Activated CD4-positive, alpha-beta memory T cell treated with anti-CD3 and anti-CD28 coated beads, Interleukin-2, amount 10 ng/mL, durations not matched to agents 7 days and 5 days (primary cell): ENCODE measurements at regions of chr5 and their contacts with region 1.

Region 1: DNA sequence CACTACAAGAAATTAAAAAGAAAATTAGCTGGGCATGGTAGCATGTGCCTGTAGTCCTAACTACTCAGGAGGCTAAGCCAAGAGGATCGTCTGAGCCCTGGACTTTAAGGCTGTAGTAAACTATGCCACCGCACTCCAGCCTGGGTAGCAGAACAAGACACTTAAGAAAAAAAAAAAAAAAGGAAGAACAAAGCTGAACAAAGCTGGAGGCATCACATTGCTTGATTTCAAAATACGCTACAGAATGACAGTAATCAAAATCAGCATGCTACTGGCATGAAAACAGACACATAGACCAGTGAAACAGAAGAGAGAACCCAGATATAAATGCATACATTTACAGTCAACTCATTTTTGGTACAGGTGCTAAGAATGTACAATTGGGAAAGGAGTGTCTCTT is 14.5 kb upstream of the OTULIN start:
- DNase-seq: no peak
- H3K4me3 Mint-ChIP-seq: no peak overlapping the region
- H3K27ac Mint-ChIP-seq: no peak overlapping the region
- H3K4me1 Mint-ChIP-seq: peaks cover 8% of the 10 kb centered on the region
- H3K27me3 Mint-ChIP-seq: peaks cover 36% of the 10 kb centered on the region

Region 2: DNA sequence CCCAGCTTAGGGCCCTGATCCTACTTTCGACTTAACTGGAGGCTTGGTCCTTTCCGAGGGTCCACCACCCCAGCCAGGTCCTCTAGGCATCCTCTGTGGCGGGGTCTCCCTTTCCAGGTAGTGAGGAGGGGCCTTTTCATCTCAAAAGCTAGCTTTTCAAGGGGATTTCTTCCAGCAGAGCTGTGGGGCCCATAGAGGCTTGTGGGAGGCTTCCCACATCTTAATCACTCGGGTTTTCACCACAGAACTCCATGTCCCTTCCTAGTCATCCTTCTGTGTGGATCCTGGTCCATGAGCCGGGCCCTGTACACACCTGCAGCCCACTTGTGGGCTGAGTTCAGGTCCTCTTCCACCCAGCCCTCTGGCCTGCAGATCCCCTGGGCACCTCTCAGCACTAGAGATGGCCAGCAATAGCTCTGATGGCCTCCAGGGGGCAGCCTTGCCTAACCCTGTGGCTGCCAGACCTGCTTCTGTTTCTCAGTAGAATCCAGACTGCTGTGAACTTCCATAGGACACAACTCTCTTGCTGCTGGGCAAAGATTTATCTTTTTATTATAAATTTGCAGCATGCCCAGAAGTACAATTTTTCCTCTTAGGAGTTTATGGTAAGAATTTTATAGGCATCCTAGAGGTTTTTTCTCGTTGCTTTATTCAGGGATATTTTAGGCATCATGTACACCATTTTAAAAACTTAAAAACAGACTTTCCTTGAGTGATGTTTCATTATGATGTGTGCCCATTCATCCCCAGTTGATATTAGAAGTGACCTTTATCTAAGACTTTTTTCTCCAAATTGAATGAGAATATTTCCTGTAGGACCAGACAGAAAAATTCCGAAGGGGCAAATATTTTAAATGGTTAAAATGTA is 298.0 kb before region 1 on chr5:
- CTCF ChIA-PET with region 1: interaction called, 50 read pairs
- POLR2A ChIA-PET with region 1: interaction called, 5 read pairs
- DNase-seq: peak; percentile 68
- H3K4me3 Mint-ChIP-seq: no peak overlapping the region
- H3K27ac Mint-ChIP-seq: no peak overlapping the region
- H3K4me1 Mint-ChIP-seq: peaks cover 8% of the 10 kb centered on the region
- H3K27me3 Mint-ChIP-seq: peaks cover 5% of the 10 kb centered on the region

Region 3: GRCh38 chr5:14357851-14358250 is 292.2 kb before region 1 on chr5:
- CTCF ChIA-PET with region 1: interaction called, 214 read pairs
- POLR2A ChIA-PET with region 1: interaction called, 9 read pairs
- DNase-seq: no peak
- H3K4me3 Mint-ChIP-seq: no peak overlapping the region
- H3K27ac Mint-ChIP-seq: no peak overlapping the region
- H3K4me1 Mint-ChIP-seq: peaks cover 8% of the 10 kb centered on the region
- H3K27me3 Mint-ChIP-seq: peaks cover 7% of the 10 kb centered on the region

Region 4: GRCh38 chr5:14399054-14399692 is 250.9 kb before region 1 on chr5:
- CTCF ChIA-PET with region 1: interaction called, 54 read pairs
- POLR2A ChIA-PET with region 1: no interaction called
- DNase-seq: no peak
- H3K4me3 Mint-ChIP-seq: no peak overlapping the region
- H3K27ac Mint-ChIP-seq: no peak overlapping the region
- H3K4me1 Mint-ChIP-seq: peaks cover 30% of the 10 kb centered on the region
- H3K27me3 Mint-ChIP-seq: peaks cover 16% of the 10 kb centered on the region

Region 5: DNA sequence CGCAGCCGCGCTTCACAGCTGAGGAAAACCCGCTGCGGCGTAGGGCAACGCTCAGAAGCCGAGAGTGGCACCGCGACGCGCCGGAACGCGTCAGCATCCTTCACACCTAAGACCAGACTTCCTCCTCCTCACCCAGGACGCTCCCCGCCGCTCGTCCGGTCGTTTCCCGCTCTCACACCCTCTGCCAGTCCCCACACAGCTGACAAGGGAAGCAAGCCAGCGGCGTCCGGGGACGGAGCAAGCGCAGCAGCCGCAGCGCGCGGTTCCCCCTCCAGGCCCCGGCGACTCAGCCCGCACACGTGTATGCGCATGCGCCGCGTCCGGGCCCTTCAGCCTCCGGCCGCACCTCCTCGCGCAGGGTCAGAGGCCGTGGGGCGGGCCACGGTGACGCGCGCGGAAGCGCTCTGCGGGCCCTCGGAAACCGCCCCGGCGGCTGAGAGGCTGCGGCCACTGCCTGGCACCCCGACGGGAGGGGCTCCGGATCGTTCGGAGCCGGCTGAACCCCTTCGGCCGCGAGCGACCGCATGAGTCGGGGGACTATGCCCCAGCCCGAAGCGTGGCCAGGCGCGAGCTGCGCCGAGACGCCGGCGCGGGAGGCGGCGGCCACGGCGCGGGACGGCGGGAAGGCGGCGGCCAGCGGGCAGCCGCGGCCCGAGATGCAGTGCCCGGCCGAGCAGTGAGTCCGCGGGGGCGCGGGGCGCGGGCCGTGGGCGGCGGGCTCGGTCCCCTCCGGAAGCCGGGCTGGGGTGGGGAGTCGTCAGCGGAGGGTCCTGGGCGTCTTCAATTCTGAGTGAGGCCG is 14.4 kb after region 1 on chr5 and contains the start of gene OTULIN:
- CTCF ChIA-PET with region 1: interaction called, 17 read pairs
- POLR2A ChIA-PET with region 1: interaction called, 9 read pairs
- DNase-seq: peak; percentile 93
- H3K4me3 Mint-ChIP-seq: peak within 1 kb of the TSS; percentile 88
- H3K27ac Mint-ChIP-seq: peak within 1 kb of the TSS; percentile 98
- H3K4me1 Mint-ChIP-seq: peaks cover 70% of the 10 kb centered on the region
- H3K27me3 Mint-ChIP-seq: no peaks in the 10 kb centered on the region
- total RNA-seq, gene OTULIN: 69.6 to 71.7 TPM